ENCODE measurements at regions of chr19 and their contacts with region 1.

Region 1: DNA sequence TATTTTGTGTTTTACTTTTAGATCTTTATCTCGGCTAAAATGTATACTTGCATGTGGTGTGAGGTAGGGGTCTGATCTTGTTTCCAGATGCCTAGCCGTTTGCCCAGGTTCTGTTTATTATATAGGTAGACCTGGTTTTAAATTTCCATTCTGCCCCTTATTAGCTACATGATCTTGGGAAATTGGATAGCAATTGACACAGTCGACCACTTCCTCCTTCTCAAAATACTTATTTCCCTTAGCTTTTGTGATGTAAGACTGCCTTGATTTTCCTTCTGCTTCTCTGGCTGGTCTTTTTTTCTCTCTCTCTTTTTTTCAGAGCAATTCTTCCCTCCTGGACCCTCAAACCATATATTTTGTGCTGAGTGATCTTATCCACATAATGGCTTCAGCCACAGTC is 3.0 kb upstream of the PGLYRP1 start:
- DNase-seq: no peak
- ATAC-seq: no peak

Region 2: GRCh38 chr19:46124638-46125115 is 98.8 kb after region 1 on chr19 and contains the start of gene IGFL3:
- intact Hi-C with region 1: no loop called
- DNase-seq: no peak
- ATAC-seq: no peak
- total RNA-seq, gene IGFL3: not detected

Region 3: DNA sequence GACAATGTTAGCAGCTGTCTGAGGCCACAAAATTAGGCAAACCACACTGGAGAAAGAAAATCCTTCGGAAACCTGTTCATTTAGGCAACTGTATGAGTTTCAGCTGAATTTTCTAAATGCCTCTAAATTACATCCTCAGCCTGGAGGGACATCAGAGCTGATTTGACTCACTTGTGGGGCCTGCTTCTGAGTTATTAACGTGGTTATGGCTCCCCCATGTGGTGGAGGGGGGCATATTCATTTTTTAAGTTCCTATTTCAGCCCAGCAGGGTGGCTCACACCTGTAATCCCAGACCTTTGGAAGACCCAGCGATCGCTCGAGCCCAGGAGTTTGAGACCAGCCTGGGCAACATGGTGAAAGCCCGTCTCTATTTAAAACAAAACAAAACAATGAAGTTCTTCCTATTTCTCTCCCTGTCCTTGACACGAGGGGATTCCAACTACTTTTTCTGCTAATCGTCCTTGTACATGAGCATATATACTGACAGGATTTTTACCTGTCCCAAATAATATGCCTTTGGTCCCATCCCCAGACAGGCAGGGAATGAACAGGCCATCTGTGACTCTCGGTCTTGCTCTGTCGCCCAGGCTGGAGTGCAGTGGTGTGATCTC is 239.5 kb after region 1 on chr19:
- intact Hi-C with region 1: loop called in 1 of 2 experiments (anchors 5 kb)
- DNase-seq: peak in 1 of 2 donors; percentile 54
- ATAC-seq: peak; percentile 73